CD8-positive, alpha-beta T cell (primary cell): ENCODE measurements at regions of chr7 and their contacts with region 1.

Region 1: GRCh38 chr7:10418985-10419384 is 554.7 kb upstream of the PHF14 start:
- DNase-seq: no peak
- ATAC-seq: no peak
- H3K4me3 ChIP-seq: no peak overlapping the region
- H3K4me3 Mint-ChIP-seq: no peak overlapping the region
- H3K27ac ChIP-seq: no peak overlapping the region
- H3K27ac Mint-ChIP-seq: no peak overlapping the region
- H3K4me1 ChIP-seq: no peaks in the 10 kb centered on the region
- H3K4me1 Mint-ChIP-seq: no peaks in the 10 kb centered on the region
- H3K27me3 ChIP-seq: no peaks in the 10 kb centered on the region
- H3K27me3 Mint-ChIP-seq: no peaks in the 10 kb centered on the region
- CTCF ChIP-seq: no peak

Region 2: GRCh38 chr7:10401793-10402192 is 17.2 kb before region 1 on chr7:
- CTCF ChIA-PET with region 1: no interaction called
- POLR2A ChIA-PET with region 1: no interaction called
- intact Hi-C with region 1: loop called in 1 of 2 experiments (anchors 2 kb)
- DNase-seq: no peak
- ATAC-seq: no peak
- H3K4me3 ChIP-seq: no peak overlapping the region
- H3K4me3 Mint-ChIP-seq: no peak overlapping the region
- H3K27ac ChIP-seq: no peak overlapping the region
- H3K27ac Mint-ChIP-seq: no peak overlapping the region
- H3K4me1 ChIP-seq: no peaks in the 10 kb centered on the region
- H3K4me1 Mint-ChIP-seq: no peaks in the 10 kb centered on the region
- H3K27me3 ChIP-seq: no peaks in the 10 kb centered on the region
- H3K27me3 Mint-ChIP-seq: no peaks in the 10 kb centered on the region
- CTCF ChIP-seq: no peak